SK-N-SH (cell line): ENCODE measurements at regions of chr3 and their contacts with region 1.

Region 1: GRCh38 chr3:118801899-118802298 is 232.7 kb downstream of the IGSF11 start:
- DNase-seq: no peak
- H3K4me3 ChIP-seq: no peak overlapping the region
- H3K27ac ChIP-seq: no peak overlapping the region
- H3K4me1 ChIP-seq: no peaks in the 10 kb centered on the region; a peak in 1 of 4 replicates
- H3K27me3 ChIP-seq: no peaks in the 10 kb centered on the region
- CTCF ChIP-seq: no peak
- EP300 ChIP-seq: no peak
- RAD21 ChIP-seq: no peak

Region 2: GRCh38 chr3:118511402-118511801 is 290.5 kb before region 1 on chr3:
- CTCF ChIA-PET with region 1: no interaction called
- POLR2A ChIA-PET with region 1: no interaction called
- DNase-seq: no peak
- H3K4me3 ChIP-seq: no peak overlapping the region
- H3K27ac ChIP-seq: no peak overlapping the region
- H3K4me1 ChIP-seq: no peaks in the 10 kb centered on the region; a peak in 1 of 4 replicates
- H3K27me3 ChIP-seq: no peaks in the 10 kb centered on the region
- CTCF ChIP-seq: no peak
- EP300 ChIP-seq: no peak
- RAD21 ChIP-seq: no peak

Region 3: GRCh38 chr3:118817748-118818165 is 15.9 kb after region 1 on chr3:
- CTCF ChIA-PET with region 1: interaction called, 12 read pairs
- POLR2A ChIA-PET with region 1: no interaction called
- DNase-seq: peak; percentile 59
- H3K4me3 ChIP-seq: no peak overlapping the region; a peak in 1 of 4 replicates
- H3K27ac ChIP-seq: no peak overlapping the region
- H3K4me1 ChIP-seq: peaks cover 0 to 2% of the 10 kb centered on the region in 2 experiments; a peak in 1 of 4 replicates
- H3K27me3 ChIP-seq: no peaks in the 10 kb centered on the region
- CTCF ChIP-seq: peak; percentile 90
- EP300 ChIP-seq: no peak
- RAD21 ChIP-seq: peak; percentile 90